Panc1 (cell line): ENCODE measurements at regions of chrX and their contacts with region 1.

Region 1: GRCh38 chrX:42934020-42934726 is 156.2 kb upstream of the PPP1R2C start:
- DNase-seq: no peak
- ATAC-seq: no peak
- H3K4me3 ChIP-seq: no peak overlapping the region
- H3K27ac ChIP-seq: no peak overlapping the region
- H3K4me1 ChIP-seq: no peaks in the 10 kb centered on the region
- H3K27me3 ChIP-seq: no peaks in the 10 kb centered on the region
- CTCF ChIP-seq: no peak

Region 2: GRCh38 chrX:43002526-43003203 is 68.5 kb after region 1 on chrX:
- CTCF ChIA-PET with region 1: no interaction called
- POLR2A ChIA-PET with region 1: interaction called, 12 read pairs
- in situ Hi-C with region 1: no loop called
- intact Hi-C with region 1: no loop called
- DNase-seq: no peak
- ATAC-seq: no peak
- H3K4me3 ChIP-seq: no peak overlapping the region
- H3K27ac ChIP-seq: no peak overlapping the region
- H3K4me1 ChIP-seq: no peaks in the 10 kb centered on the region
- H3K27me3 ChIP-seq: no peaks in the 10 kb centered on the region
- CTCF ChIP-seq: no peak